ENCODE measurements at regions of chr7 and their contacts with region 1.

Region 1: DNA sequence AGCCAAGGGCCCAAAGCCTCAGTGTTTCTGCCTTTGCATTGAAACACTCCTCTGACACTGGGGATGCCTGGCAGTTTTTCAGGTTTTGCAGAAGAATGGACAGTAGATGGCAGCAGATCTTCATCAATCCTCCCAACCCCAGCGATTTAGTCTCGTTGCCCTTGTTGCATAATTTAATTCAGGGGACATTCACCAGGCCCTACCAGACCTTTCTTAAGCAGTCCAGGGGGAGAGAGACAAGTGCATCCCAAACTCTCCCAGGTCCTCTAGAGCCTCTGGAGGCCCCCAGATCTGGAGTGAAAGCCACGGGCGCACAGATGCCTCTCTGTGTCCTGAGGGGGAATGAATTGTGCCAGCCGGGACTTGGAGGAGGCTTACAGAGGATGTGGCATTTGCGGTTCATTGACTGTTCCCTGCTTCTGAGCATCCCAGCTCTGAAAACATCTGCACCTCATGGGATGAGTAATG is 29.6 kb downstream of the MINDY4 start:
- DNase-seq: peak; percentile 42 to 54
- ATAC-seq: peak; percentile 86
- H3K4me3 ChIP-seq: no peak overlapping the region
- H3K27ac ChIP-seq: peak overlapping the region in 1 of 4 donors; percentile 60
- H3K4me1 ChIP-seq: peaks cover 12 to 39% of the 10 kb centered on the region in 2 donors
- H3K27me3 ChIP-seq: no peaks in the 10 kb centered on the region
- CTCF ChIP-seq: peak; percentile 64 to 75 (median 71)
- POLR2A ChIP-seq: no peak

Region 2: DNA sequence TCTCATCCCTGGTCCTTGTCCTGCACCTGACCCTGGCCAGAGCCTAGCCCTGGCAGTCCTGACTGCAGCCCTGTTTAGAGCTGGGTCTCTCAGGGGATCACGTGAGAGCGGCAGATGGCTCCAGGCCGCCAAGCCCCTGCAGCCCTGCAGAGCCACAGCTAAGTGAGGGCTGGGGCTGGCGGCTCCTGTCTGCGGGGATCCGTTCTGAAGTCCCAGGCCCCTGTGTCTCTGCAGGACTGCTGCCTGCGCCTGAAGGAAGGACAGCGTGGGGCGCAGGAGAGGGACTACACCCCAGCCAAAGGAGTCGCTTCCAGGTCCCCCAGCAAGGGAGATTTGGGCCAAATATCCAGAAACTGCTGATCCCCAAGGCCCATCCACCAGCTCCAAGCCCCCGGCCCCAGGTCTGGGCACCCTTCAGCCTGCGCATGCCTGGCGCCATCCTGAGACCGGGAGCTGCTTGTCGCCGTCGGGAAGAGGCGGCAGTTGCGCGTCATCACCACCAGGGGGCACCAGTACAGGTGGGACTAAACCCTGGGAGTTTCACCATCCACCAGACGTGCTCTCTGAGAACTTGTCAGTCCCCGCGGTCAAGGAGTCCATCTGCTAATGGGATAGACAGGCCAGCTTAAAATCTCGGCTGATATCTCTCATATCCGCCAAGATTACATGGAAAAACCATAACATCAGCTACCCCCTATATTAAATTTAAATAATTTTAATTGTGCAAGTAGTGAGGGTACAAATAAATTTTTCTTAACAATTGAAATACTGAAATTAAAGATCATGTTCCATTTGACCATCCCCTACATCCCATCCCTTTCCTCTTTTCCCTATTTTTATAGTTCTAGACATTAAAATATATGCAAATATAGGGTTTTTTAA is 137.9 kb after region 1 on chr7:
- in situ Hi-C with region 1: no loop called
- intact Hi-C with region 1: loop called (anchors 10 kb)
- DNase-seq: peak; percentile 38 to 56
- ATAC-seq: peak; percentile 58 to 78
- H3K4me3 ChIP-seq: peak overlapping the region in 1 of 4 donors; percentile 11
- H3K27ac ChIP-seq: no peak overlapping the region
- H3K4me1 ChIP-seq: peaks cover 0 to 4% of the 10 kb centered on the region in 2 donors
- H3K27me3 ChIP-seq: peaks cover 0 to 4% (median 4%) of the 10 kb centered on the region in 3 donors
- CTCF ChIP-seq: peak; percentile 54 to 96 (median 83)
- POLR2A ChIP-seq: no peak

Region 3: GRCh38 chr7:30974605-30975255 is 173.9 kb after region 1 on chr7:
- in situ Hi-C with region 1: loop called (anchors 5 kb)
- intact Hi-C with region 1: loop called (anchors 1 kb)
- DNase-seq: no peak
- ATAC-seq: peak in 1 of 2 donors; percentile 61
- H3K4me3 ChIP-seq: no peak overlapping the region
- H3K27ac ChIP-seq: no peak overlapping the region
- H3K4me1 ChIP-seq: no peaks in the 10 kb centered on the region
- H3K27me3 ChIP-seq: no peaks in the 10 kb centered on the region
- CTCF ChIP-seq: peak; percentile 26 to 66 (median 58)
- POLR2A ChIP-seq: no peak

Region 4: GRCh38 chr7:31051598-31052486 is 251.0 kb after region 1 on chr7 and contains the start of gene ADCYAP1R1:
- in situ Hi-C with region 1: no loop called
- intact Hi-C with region 1: loop called (anchors 10 kb)
- DNase-seq: no peak
- ATAC-seq: peak in 1 of 2 donors; percentile 13
- H3K4me3 ChIP-seq: peak within 1 kb of the TSS; percentile 34 to 54 (median 46)
- H3K27ac ChIP-seq: no peak within 1 kb of the TSS
- H3K4me1 ChIP-seq: peaks cover 0 to 5% of the 10 kb centered on the region in 2 donors
- H3K27me3 ChIP-seq: peaks cover 14 to 22% (median 17%) of the 10 kb centered on the region in 3 donors
- CTCF ChIP-seq: no peak
- POLR2A ChIP-seq: no peak
- total RNA-seq, gene ADCYAP1R1: 0.05 to 0.33 (median 0.21) TPM

Region 5: DNA sequence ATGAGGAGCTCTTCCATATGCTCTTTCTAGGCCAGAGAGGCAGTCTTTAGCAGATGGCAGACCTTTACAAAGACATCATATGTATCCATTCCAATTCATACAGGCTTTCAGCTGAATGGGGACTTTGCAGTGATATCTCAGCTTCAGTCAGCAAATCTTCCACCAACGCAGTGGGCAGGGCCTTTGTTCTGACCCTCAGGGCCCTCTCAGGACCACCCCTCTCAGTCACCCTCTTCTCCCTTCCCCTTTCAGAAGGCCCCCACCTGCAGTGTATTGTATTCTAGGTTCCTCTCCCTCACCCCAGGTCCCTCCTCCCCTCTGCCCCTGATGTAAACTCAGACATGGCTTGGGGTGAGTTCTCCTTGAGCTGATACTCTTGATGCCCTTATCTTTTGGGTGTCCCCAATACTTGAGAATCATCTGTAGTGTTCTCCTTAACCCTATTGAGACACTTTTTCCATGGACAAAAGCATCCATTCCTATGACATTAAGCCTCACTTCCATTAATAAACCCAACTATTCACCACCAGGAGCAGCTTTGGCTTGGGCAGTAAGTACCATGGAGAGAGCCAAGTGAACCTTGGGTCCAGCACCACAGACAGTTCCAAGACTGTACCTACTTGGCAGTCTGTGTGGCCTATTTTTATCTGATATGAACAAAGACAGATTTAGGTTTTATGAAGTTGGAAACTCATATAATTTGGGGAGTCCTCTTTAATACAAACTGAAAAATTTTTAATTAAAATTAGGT is 313.9 kb after region 1 on chr7:
- in situ Hi-C with region 1: loop called in 1 of 4 experiments (anchors 10 kb)
- intact Hi-C with region 1: no loop called
- DNase-seq: no peak
- ATAC-seq: no peak
- H3K4me3 ChIP-seq: no peak overlapping the region
- H3K27ac ChIP-seq: no peak overlapping the region
- H3K4me1 ChIP-seq: no peaks in the 10 kb centered on the region
- H3K27me3 ChIP-seq: no peaks in the 10 kb centered on the region
- CTCF ChIP-seq: no peak
- POLR2A ChIP-seq: no peak

Region 6: DNA sequence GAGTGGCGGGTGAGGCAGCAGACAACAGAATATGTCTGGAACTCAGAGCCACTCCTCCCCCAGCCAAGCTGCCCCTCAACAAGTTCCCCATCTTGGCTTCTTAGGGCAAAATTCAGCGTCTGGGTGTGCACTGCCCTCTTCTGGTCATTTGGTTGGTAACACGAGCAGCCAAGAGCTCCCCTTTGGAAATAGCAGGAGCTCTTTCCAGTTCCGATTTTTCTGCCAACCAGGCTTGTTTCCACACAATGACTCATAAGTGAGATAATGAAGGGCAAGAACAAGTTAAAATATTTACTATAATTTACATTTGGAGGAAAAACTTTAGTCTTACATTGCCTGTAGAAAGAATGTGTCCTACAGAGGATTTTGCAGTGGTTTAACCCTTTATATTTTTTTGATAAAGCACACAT is 321.8 kb after region 1 on chr7:
- in situ Hi-C with region 1: loop called (anchors 5 to 10 kb)
- intact Hi-C with region 1: loop called (anchors 1 kb)
- DNase-seq: peak in 1 of 2 donors; percentile 49
- ATAC-seq: peak; percentile 47 to 78
- H3K4me3 ChIP-seq: no peak overlapping the region
- H3K27ac ChIP-seq: no peak overlapping the region
- H3K4me1 ChIP-seq: no peaks in the 10 kb centered on the region
- H3K27me3 ChIP-seq: no peaks in the 10 kb centered on the region
- CTCF ChIP-seq: peak; percentile 35 to 76 (median 63)
- POLR2A ChIP-seq: no peak